Posterior cingulate gyrus (tissue), 11 donors: ENCODE measurements at regions of chr6 and their contacts with region 1.

Region 1: DNA sequence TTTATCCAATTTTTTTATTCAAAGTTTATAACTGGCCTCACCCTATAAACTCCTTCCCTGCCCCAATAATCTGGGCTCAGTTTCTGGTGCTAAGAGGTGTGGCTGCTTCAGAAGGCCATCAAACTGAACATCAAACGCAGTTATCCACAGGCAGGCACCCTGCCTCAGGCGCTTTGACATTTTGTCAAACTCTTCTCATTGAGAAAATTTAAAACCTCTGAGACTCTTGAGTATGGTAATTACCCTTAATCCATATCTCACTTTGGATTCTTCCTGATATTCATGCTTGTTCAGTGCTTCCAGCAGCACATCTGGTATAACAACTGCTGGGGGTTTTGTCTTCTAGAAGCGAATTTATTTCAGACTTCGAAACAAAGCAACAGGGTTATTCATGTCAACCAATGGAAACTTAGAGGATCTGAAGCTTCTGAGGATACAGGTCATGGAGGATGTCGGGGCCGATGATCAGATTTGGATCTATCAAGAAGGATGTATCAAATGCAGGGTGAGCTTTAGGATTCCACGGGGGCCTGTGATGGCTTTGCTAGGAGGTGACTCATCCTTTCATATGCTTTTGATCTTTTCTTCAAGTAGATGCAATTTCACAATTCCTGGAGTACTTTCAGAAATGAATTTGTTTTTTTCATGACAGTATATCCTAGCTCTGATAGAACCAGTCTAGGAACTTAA is 68.2 kb downstream of the RTN4IP1 start:
- DNase-seq: no peak

Region 2: GRCh38 chr6:106339334-106340029 is 221.7 kb before region 1 on chr6:
- intact Hi-C with region 1: loop called (anchors 2 kb)
- DNase-seq: peak in 5 of 10 donors; percentile 9 to 55 (median 39)

Region 3: DNA sequence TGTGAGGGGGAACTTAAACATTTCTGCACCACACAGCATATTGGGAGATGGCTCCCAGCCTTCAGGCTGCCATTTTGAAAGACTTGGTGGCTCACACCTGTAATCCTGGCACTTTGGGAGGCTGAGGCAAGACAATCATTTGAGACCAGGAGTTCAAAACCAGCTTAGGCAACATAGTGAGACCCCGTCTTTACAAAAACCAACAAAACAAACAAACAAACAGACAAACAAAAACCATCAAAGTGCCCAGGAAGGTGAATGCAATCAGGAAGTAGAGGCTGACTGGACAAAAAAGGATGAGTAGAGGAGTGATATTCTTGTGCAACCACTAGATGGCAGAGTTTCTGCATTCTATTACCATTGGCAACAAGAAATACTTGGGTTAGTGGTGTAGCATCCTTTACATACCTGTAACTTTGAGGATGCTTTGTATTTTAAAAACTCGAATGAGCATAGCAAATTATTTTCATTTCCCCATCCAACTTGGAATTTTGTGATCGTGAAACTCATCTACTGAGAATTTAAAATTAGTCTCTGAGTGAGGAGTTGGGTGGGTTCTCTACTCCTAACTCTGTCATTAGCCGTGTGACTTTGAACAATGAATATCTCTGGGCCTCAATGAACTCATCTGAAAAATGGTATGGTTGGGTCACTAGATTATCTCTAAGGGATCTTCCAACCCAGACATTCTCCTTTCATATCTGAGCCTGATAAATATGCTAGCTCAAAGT is 116.2 kb before region 1 on chr6:
- intact Hi-C with region 1: loop called (anchors 1 kb)
- DNase-seq: no peak

Region 4: GRCh38 chr6:106927531-106928398 is 366.6 kb after region 1 on chr6:
- intact Hi-C with region 1: no loop called
- DNase-seq: no peak